CD14-positive monocyte (primary cell): ENCODE measurements at regions of chr1 and their contacts with region 1.

Region 1: GRCh38 chr1:2412519-2413233 is at the start of gene PEX10:
- DNase-seq: peak; percentile 93 to 94 (median 94)
- H3K4me3 ChIP-seq: peak within 1 kb of the TSS; percentile 60 to 91 (median 74)
- H3K4me3 Mint-ChIP-seq: peak within 1 kb of the TSS; percentile 76 to 81
- H3K27ac ChIP-seq: peak within 1 kb of the TSS; percentile 27 to 92
- H3K27ac Mint-ChIP-seq: peak within 1 kb of the TSS; percentile 50 to 86 (median 77)
- H3K4me1 ChIP-seq: peaks cover 24 to 46% of the 10 kb centered on the region in 2 donors
- H3K4me1 Mint-ChIP-seq: peaks cover 19% of the 10 kb centered on the region
- H3K27me3 ChIP-seq: peaks cover 0 to 13% of the 10 kb centered on the region in 2 donors
- H3K27me3 Mint-ChIP-seq: peaks cover 28 to 36% (median 28%) of the 10 kb centered on the region in 3 donors
- CTCF ChIP-seq: no peak
- polyA plus RNA-seq, gene PEX10: 7.0 to 10.5 (median 8.2) TPM

Region 2: GRCh38 chr1:1919304-1920056 is 493.2 kb before region 1 on chr1:
- intact Hi-C with region 1: loop called in 1 of 2 experiments (anchors 5 kb)
- DNase-seq: peak; percentile 99
- H3K4me3 ChIP-seq: peak overlapping the region; percentile 41 to 79 (median 56)
- H3K4me3 Mint-ChIP-seq: peak overlapping the region; percentile 78 to 89
- H3K27ac ChIP-seq: peak overlapping the region in 1 of 2 donors; percentile 5
- H3K27ac Mint-ChIP-seq: peak overlapping the region in 5 of 7 donors; percentile 62 to 90 (median 75)
- H3K4me1 ChIP-seq: peaks cover 13 to 19% of the 10 kb centered on the region in 2 donors
- H3K4me1 Mint-ChIP-seq: peaks cover 7% of the 10 kb centered on the region
- H3K27me3 ChIP-seq: peaks cover 0 to 14% of the 10 kb centered on the region in 2 donors
- H3K27me3 Mint-ChIP-seq: peaks cover 2 to 18% (median 12%) of the 10 kb centered on the region in 3 donors
- CTCF ChIP-seq: no peak

Region 3: GRCh38 chr1:2391041-2391930 is 21.4 kb before region 1 on chr1 and contains the starts of genes MORN1 and RER1:
- intact Hi-C with region 1: loop called in 1 of 2 experiments (anchors 1 kb)
- DNase-seq: peak; percentile 99 to 100 (median 99)
- H3K4me3 ChIP-seq: peak within 1 kb of the TSS; percentile 50 to 94 (median 78)
- H3K4me3 Mint-ChIP-seq: peak within 1 kb of the TSS; percentile 81 to 90
- H3K27ac ChIP-seq: peak within 1 kb of the TSS in 1 of 2 donors; percentile 79
- H3K27ac Mint-ChIP-seq: peak within 1 kb of the TSS; percentile 57 to 89 (median 85)
- H3K4me1 ChIP-seq: peaks cover 14 to 26% of the 10 kb centered on the region in 2 donors
- H3K4me1 Mint-ChIP-seq: peaks cover 30% of the 10 kb centered on the region
- H3K27me3 ChIP-seq: no peaks in the 10 kb centered on the region
- H3K27me3 Mint-ChIP-seq: no peaks in the 10 kb centered on the region
- CTCF ChIP-seq: no peak
- polyA plus RNA-seq, gene MORN1: 1.5 to 3.0 (median 1.7) TPM
- polyA plus RNA-seq, gene RER1: 98.3 to 235 (median 193) TPM

Region 4: DNA sequence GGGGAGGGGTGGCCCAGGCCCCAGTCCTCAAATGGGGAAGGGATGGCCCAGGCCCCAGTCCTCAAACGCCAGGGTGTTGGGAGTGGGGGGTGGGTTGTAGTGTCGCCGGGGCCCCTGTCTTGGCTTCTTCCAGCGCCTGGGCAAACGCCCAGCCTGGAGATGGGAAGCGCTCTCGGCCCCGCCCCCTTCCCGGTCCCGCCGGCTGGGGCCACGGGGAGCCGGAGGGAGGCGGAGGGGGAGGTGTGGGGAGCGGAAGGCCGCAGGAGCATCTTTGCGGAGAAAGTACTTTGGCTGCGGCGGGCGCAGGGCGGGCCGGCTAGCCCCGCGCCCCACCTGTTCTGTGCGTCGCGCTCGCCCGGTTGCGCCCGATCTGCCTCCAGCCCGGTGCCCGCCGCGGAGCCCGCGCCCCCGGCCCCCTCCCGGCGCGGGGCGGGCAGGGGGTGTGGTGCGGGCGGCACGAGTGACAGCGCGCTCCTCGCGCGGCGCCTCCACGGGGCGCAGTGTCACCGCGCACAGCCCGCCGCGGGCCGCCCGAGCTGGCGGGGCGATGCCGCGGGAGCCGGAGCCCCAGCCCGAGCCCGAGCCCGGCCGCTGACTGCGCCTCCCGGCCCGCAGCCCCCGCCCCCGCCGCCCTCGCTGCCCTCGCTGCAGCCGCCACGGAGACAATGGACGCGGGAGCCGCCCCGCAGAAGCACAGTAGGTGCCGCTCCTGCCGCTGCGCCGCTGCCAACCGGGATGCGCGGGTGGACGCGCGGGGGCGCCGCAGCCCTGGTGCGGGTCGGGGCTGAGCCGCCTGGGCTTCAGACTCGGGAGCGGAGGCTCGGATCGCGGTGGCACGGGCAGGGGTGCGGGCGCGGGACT is 30.8 kb after region 1 on chr1:
- intact Hi-C with region 1: no loop called
- DNase-seq: no peak
- H3K4me3 ChIP-seq: no peak overlapping the region
- H3K4me3 Mint-ChIP-seq: peak overlapping the region in 1 of 2 donors; percentile 68
- H3K27ac ChIP-seq: no peak overlapping the region
- H3K27ac Mint-ChIP-seq: no peak overlapping the region
- H3K4me1 ChIP-seq: no peaks in the 10 kb centered on the region
- H3K4me1 Mint-ChIP-seq: no peaks in the 10 kb centered on the region
- H3K27me3 ChIP-seq: peaks cover 0 to 24% of the 10 kb centered on the region in 2 donors
- H3K27me3 Mint-ChIP-seq: peaks cover 19 to 43% (median 38%) of the 10 kb centered on the region in 3 donors
- CTCF ChIP-seq: no peak

Region 5: GRCh38 chr1:2545759-2546514 is 133.3 kb after region 1 on chr1:
- intact Hi-C with region 1: loop called (anchors 5 kb)
- DNase-seq: peak; percentile 88 to 93 (median 91)
- H3K4me3 ChIP-seq: peak overlapping the region; percentile 52 to 88 (median 76)
- H3K4me3 Mint-ChIP-seq: peak overlapping the region; percentile 76 to 81
- H3K27ac ChIP-seq: peak overlapping the region; percentile 99 to 100
- H3K27ac Mint-ChIP-seq: peak overlapping the region in 6 of 7 donors; percentile 54 to 99 (median 96)
- H3K4me1 ChIP-seq: peaks cover 40 to 52% of the 10 kb centered on the region in 2 donors
- H3K4me1 Mint-ChIP-seq: peaks cover 28% of the 10 kb centered on the region
- H3K27me3 ChIP-seq: peaks cover 0 to 21% of the 10 kb centered on the region in 2 donors
- H3K27me3 Mint-ChIP-seq: peaks cover 13 to 38% (median 21%) of the 10 kb centered on the region in 3 donors
- CTCF ChIP-seq: no peak

Region 6: DNA sequence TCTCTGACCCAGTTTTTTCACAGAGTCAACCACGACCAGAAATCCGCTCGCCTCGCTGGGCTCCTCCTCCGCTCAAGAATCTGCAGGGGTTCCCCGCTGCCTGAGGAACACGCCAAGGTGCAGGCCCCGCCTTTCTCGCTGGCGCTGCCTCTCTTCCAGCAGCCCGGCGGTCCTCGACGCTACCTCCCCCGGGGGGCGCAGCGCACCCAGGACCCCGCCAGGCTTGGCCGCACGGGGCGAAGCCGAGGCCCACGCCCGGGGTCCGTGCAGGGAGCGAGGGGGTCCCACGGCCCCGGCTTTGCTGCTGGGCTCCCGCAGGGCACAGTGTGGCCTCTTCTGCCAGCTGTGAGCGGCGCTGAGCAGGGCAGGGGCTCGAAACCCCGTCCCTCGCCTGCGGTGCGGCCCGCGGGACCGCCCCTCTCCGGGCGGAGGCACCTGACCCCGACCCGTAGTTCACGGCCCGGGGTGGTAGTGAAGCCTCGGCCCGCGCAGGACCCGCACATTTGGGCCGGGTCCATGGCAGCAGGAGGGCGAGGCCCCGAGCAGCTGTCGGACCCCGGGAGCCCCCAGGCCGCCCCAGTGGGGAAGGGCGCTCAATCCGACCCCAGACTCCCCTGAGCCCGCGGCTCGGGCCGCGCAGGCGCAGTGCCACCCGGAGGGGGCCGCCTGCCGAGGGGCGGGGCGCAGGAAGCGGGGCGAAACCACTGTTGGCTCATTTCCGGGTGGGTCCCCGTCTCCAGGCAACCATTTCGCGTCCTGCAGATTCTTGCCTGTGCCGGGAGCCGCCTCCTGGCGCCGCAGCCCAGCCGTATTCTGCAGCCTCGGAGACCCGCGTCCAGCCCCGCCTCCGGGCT is 230.1 kb after region 1 on chr1:
- intact Hi-C with region 1: loop called (anchors 2 to 5 kb)
- DNase-seq: peak; percentile 79 to 89 (median 84)
- H3K4me3 ChIP-seq: peak overlapping the region; percentile 54 to 86 (median 56)
- H3K4me3 Mint-ChIP-seq: peak overlapping the region; percentile 80 to 91
- H3K27ac ChIP-seq: peak overlapping the region in 1 of 2 donors; percentile 88
- H3K27ac Mint-ChIP-seq: peak overlapping the region in 4 of 7 donors; percentile 8 to 67 (median 55)
- H3K4me1 ChIP-seq: peaks cover 14 to 21% of the 10 kb centered on the region in 2 donors
- H3K4me1 Mint-ChIP-seq: peaks cover 8% of the 10 kb centered on the region
- H3K27me3 ChIP-seq: peaks cover 0 to 4% of the 10 kb centered on the region in 2 donors
- H3K27me3 Mint-ChIP-seq: peaks cover 5 to 20% (median 7%) of the 10 kb centered on the region in 3 donors
- CTCF ChIP-seq: no peak

Region 7: GRCh38 chr1:2801535-2802291 is 389.0 kb after region 1 on chr1 and contains the start of gene TTC34:
- intact Hi-C with region 1: loop called in 1 of 2 experiments (anchors 10 kb)
- DNase-seq: peak; percentile 8 to 39 (median 12)
- H3K4me3 ChIP-seq: no peak within 1 kb of the TSS
- H3K4me3 Mint-ChIP-seq: no peak within 1 kb of the TSS
- H3K27ac ChIP-seq: no peak within 1 kb of the TSS
- H3K27ac Mint-ChIP-seq: peak within 1 kb of the TSS in 1 of 7 donors; percentile 26
- H3K4me1 ChIP-seq: no peaks in the 10 kb centered on the region
- H3K4me1 Mint-ChIP-seq: peaks cover 3% of the 10 kb centered on the region
- H3K27me3 ChIP-seq: no peaks in the 10 kb centered on the region
- H3K27me3 Mint-ChIP-seq: peaks cover 2 to 5% (median 5%) of the 10 kb centered on the region in 3 donors
- CTCF ChIP-seq: peak; percentile 39
- polyA plus RNA-seq, gene TTC34: 0.03 to 1.00 TPM in 2 of 3 donors, not detected in the other